ENCODE measurements at regions of chr3 and their contacts with region 1.

Region 1: GRCh38 chr3:14461748-14462324 is 59.4 kb downstream of the SLC6A6 start:
- DNase-seq: peak; percentile 44
- H3K4me3 ChIP-seq: no peak overlapping the region
- H3K27ac ChIP-seq: no peak overlapping the region
- H3K4me1 ChIP-seq: peaks cover 4% of the 10 kb centered on the region
- H3K27me3 ChIP-seq: no peaks in the 10 kb centered on the region
- CTCF ChIP-seq: peak; percentile 68 to 96

Region 2: GRCh38 chr3:13901935-13902584 is 559.8 kb before region 1 on chr3:
- CTCF ChIA-PET with region 1: no interaction called
- dilution Hi-C with region 1: loop called (anchors 25 kb)
- in situ Hi-C with region 1: loop called (anchors 10 kb)
- intact Hi-C with region 1: no loop called
- DNase-seq: no peak
- H3K4me3 ChIP-seq: no peak overlapping the region
- H3K27ac ChIP-seq: no peak overlapping the region
- H3K4me1 ChIP-seq: no peaks in the 10 kb centered on the region
- H3K27me3 ChIP-seq: no peaks in the 10 kb centered on the region
- CTCF ChIP-seq: no peak

Region 3: DNA sequence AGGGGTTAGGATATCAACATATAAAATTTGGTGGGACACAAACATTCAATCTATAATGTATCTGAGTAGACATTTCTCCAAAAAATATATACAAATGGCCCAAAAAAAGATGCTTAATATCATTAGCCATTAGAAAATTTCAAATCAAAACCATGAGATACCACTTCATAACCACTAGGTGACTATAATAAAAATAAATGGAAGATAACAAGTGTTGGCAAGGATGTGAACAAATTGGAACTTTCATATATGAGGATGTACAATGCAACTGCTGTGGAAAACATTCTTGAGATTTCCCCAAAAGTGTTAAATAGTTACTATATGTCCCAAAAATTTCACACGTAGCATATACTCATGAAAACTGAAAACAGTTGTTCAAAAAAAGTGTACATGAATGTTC is 545.5 kb before region 1 on chr3:
- CTCF ChIA-PET with region 1: no interaction called
- dilution Hi-C with region 1: loop called (anchors 25 kb)
- in situ Hi-C with region 1: no loop called
- intact Hi-C with region 1: no loop called
- DNase-seq: no peak
- H3K4me3 ChIP-seq: no peak overlapping the region
- H3K27ac ChIP-seq: no peak overlapping the region
- H3K4me1 ChIP-seq: no peaks in the 10 kb centered on the region
- H3K27me3 ChIP-seq: no peaks in the 10 kb centered on the region
- CTCF ChIP-seq: no peak

Region 4: GRCh38 chr3:14210843-14211594 is 250.8 kb before region 1 on chr3:
- CTCF ChIA-PET with region 1: no interaction called
- dilution Hi-C with region 1: loop called (anchors 5 kb)
- in situ Hi-C with region 1: loop called in 1 of 2 experiments (anchors 10 kb)
- intact Hi-C with region 1: no loop called
- DNase-seq: no peak
- H3K4me3 ChIP-seq: no peak overlapping the region
- H3K27ac ChIP-seq: no peak overlapping the region
- H3K4me1 ChIP-seq: no peaks in the 10 kb centered on the region
- H3K27me3 ChIP-seq: no peaks in the 10 kb centered on the region
- CTCF ChIP-seq: no peak

Region 5: GRCh38 chr3:14402304-14402811 is 59.5 kb before region 1 on chr3 and contains the start of gene SLC6A6:
- CTCF ChIA-PET with region 1: interaction called, 4 read pairs
- dilution Hi-C with region 1: no loop called
- in situ Hi-C with region 1: no loop called
- intact Hi-C with region 1: loop called (anchors 1 kb)
- DNase-seq: peak; percentile 96
- H3K4me3 ChIP-seq: peak within 1 kb of the TSS; percentile 51 to 83 (median 63)
- H3K27ac ChIP-seq: peak within 1 kb of the TSS; percentile 67
- H3K4me1 ChIP-seq: peaks cover 19% of the 10 kb centered on the region
- H3K27me3 ChIP-seq: no peaks in the 10 kb centered on the region
- CTCF ChIP-seq: peak; percentile 25 to 66
- total RNA-seq, gene SLC6A6: 14.8 to 17.7 TPM